ENCODE measurements at regions of chr5 and their contacts with region 1.

Region 1: DNA sequence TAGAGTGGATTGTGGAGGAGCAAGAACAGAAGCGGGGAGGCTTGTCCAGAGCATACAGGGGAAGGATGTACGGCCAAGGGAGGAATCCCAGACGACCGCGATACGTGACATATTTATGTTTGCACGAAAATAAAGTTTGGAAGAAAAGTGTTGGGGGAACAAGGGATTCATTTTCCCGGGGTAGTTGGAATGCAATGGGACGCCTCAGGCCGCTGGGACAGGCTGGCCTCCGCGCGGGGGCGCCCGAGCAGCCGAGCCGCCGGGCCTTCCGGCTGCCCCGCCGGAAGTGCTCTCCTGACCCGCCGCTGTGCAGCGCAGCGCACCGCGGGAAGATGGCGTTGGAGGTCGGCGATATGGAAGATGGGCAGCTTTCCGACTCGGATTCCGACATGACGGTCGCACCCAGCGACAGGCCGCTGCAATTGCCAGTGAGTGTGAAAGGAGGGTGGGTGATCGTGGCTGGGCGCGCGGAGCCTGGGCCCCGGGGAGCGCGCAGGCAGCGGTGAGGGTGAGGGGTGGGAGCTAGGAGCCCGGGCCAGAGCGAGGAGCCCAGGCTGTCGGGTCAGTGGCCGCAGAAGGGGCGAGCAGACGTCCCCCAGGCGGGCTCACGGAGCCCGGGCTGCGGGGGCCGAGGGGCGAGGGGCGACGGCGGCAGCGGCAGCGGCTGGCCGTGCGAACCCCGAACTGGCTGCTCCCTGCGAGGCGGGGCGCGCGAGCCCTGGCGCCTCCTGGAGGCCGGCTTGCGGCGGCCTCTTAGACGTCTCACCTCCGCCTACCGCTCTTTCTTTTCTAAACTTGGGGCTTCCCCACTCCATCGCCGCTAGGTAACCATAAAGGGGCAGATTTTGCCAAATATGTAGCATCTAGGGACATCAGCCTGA is at the start of gene PHAX:
- DNase-seq: peak; percentile 64
- H3K4me3 Mint-ChIP-seq: peak within 1 kb of the TSS; percentile 94
- H3K27ac Mint-ChIP-seq: peak within 1 kb of the TSS; percentile 95
- H3K4me1 Mint-ChIP-seq: peaks cover 22% of the 10 kb centered on the region
- H3K27me3 Mint-ChIP-seq: peaks cover 2% of the 10 kb centered on the region
- total RNA-seq, gene PHAX: 45.3 and 47.7 TPM in 2 replicates

Region 2: GRCh38 chr5:126015235-126016181 is 585.4 kb before region 1 on chr5:
- intact Hi-C with region 1: no loop called
- DNase-seq: no peak
- H3K4me3 Mint-ChIP-seq: no peak overlapping the region
- H3K27ac Mint-ChIP-seq: no peak overlapping the region
- H3K4me1 Mint-ChIP-seq: no peaks in the 10 kb centered on the region
- H3K27me3 Mint-ChIP-seq: no peaks in the 10 kb centered on the region

Region 3: DNA sequence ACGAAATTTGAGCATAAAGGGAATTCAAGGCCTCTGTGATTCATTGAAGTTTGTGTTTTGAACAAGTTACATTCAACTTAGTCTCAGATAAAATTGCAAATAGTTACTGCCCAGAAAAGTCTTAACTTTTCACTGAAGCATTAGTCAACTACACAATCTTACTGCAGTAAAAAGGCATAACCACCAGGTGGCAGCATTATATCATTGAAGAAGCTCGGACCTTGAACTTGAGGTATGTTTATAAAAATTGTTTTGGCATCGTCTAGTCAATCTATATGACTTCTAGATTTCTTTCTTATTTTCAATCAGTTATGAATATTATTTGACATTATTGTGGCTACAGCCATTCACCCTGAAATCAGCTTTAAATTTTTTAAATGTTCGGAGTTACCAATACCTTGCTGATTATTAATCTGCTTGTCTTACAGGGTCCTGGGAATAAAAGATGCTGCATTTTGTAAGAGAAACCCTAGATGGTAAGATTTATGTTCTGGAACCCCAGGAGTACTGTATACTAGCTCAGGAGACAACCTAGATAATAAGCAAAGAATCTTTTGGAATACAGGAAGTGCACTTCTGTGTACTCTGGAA is 261.6 kb before region 1 on chr5:
- intact Hi-C with region 1: loop called (anchors 1 kb)
- DNase-seq: peak; percentile 14
- H3K4me3 Mint-ChIP-seq: no peak overlapping the region
- H3K27ac Mint-ChIP-seq: no peak overlapping the region
- H3K4me1 Mint-ChIP-seq: no peaks in the 10 kb centered on the region
- H3K27me3 Mint-ChIP-seq: peaks cover 4% of the 10 kb centered on the region

Region 4: DNA sequence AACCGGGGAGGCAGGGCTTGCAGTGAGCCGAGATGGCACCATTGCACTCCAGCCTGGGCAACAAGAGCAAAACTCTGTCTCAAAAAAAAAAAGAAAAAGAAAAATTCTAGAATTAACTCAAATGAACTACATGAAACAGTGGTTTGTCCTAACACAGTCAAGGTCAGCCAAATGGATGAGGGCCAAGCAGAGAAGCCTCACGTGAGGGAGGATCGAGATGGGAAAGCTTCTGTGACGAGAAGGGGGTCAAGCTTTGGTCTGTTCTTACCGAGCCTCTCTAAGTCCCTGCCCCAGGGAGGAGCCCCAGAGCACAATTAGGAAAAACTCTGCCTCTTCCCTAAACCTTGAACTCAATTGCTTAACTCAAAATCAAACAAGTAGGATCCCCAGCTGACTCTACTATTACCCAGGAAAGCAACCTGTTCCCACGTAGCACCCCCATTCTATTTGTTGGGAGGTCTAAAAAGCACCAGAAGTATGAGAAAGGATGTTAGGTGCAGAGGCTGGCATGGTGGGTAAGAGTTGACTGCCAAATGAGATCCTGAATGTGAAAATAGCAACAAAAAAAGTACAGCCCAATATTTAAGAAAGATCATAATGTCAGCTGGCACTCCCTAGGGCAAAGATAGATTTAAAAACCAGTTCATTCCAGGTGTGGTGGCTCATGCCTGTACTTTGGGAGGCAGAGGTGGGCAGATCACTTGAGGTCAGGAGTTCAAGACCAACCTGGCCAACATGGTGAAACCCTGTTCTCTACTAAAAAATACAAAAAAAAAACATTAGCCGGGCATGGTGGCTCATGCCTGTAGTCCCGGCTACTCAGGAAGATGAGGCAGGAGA is 13.1 kb before region 1 on chr5:
- intact Hi-C with region 1: no loop called
- DNase-seq: no peak
- H3K4me3 Mint-ChIP-seq: no peak overlapping the region
- H3K27ac Mint-ChIP-seq: no peak overlapping the region
- H3K4me1 Mint-ChIP-seq: no peaks in the 10 kb centered on the region
- H3K27me3 Mint-ChIP-seq: peaks cover 3% of the 10 kb centered on the region

Measured in activated T-helper 2 cell treated with anti-CD3 and anti-CD28 coated beads, Interferon-gamma antibody, Interleukin-2, Interleukin-4, amounts not matched to agents 10 μg/mL and 5 μg/mL and 100 μg/mL, durations not matched to agents 14 hours and 24 hours and 36 hours (primary cell).